PC-9 (cell line): ENCODE measurements at regions of chr6 and their contacts with region 1.

Region 1: GRCh38 chr6:52536424-52536916 is 40.4 kb downstream of the TRAM2 start:
- DNase-seq: no peak
- H3K4me3 ChIP-seq: no peak overlapping the region
- H3K27ac ChIP-seq: no peak overlapping the region
- H3K4me1 ChIP-seq: no peaks in the 10 kb centered on the region
- H3K27me3 ChIP-seq: no peaks in the 10 kb centered on the region
- CTCF ChIP-seq: no peak

Region 2: GRCh38 chr6:51777618-51778017 is 758.9 kb before region 1 on chr6:
- CTCF ChIA-PET with region 1: no interaction called
- POLR2A ChIA-PET with region 1: interaction called, 10 read pairs
- intact Hi-C with region 1: no loop called
- DNase-seq: no peak
- H3K4me3 ChIP-seq: no peak overlapping the region
- H3K27ac ChIP-seq: no peak overlapping the region
- H3K4me1 ChIP-seq: no peaks in the 10 kb centered on the region
- H3K27me3 ChIP-seq: no peaks in the 10 kb centered on the region
- CTCF ChIP-seq: no peak

Region 3: DNA sequence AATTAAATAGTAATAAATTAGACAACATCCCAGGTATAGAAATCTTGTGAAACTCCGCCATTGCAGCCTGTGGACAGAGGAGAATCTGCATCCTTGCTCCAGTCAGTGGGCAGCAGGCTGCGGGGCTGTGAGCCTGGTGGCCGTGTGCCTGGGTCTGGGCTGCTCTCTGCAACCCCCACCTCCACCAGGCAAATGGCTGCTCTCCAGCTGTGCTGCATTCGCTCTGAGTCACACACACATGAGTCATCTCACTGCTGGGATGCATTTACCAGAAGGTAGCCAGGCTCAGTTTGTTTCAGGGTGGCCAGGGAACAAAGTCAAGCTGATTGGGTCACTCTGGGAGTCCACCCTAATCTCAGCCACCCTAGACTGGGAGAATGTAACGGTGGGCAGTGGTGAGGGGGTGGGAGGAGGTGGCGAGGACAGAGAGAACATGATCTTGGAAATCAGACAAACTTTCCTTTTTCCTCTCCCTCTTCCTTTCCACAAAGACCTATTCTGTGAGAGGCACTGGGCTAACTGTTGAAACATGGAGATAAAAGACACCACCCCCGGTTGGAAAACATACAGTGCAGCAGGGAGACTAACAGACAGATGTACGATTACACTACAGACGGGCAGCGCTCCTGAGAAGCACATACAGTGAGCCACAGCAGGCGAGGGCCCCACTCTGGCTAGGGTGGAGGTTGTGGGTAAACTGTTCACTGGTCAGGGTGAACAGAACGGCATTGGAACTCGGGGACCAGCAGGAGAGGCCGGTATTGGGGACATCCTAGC is 18.8 kb before region 1 on chr6:
- CTCF ChIA-PET with region 1: no interaction called
- POLR2A ChIA-PET with region 1: interaction called, 7 read pairs
- intact Hi-C with region 1: loop called (anchors 2 kb)
- DNase-seq: peak; percentile 71 to 76
- H3K4me3 ChIP-seq: no peak overlapping the region
- H3K27ac ChIP-seq: peak overlapping the region; percentile 42
- H3K4me1 ChIP-seq: peaks cover 42% of the 10 kb centered on the region
- H3K27me3 ChIP-seq: no peaks in the 10 kb centered on the region
- CTCF ChIP-seq: no peak

Region 4: GRCh38 chr6:52577022-52577777 is 40.7 kb after region 1 on chr6 and contains the start of gene TRAM2:
- CTCF ChIA-PET with region 1: no interaction called
- POLR2A ChIA-PET with region 1: no interaction called
- intact Hi-C with region 1: no loop called
- DNase-seq: peak; percentile 48 to 86
- H3K4me3 ChIP-seq: peak within 1 kb of the TSS; percentile 67
- H3K27ac ChIP-seq: peak within 1 kb of the TSS; percentile 83
- H3K4me1 ChIP-seq: peaks cover 34% of the 10 kb centered on the region
- H3K27me3 ChIP-seq: no peaks in the 10 kb centered on the region
- CTCF ChIP-seq: no peak
- total RNA-seq, gene TRAM2: 28.1 and 40.9 TPM in 2 replicates